ENCODE measurements at regions of chr1 and their contacts with region 1.

Region 1: GRCh38 chr1:116498789-116499628 is 71.8 kb downstream of the CD58 start:
- DNase-seq: peak; percentile 63 to 73
- H3K4me3 ChIP-seq: no peak overlapping the region
- H3K4me3 Mint-ChIP-seq: no peak overlapping the region
- H3K27ac Mint-ChIP-seq: no peak overlapping the region
- H3K4me1 ChIP-seq: peaks cover 17% of the 10 kb centered on the region
- H3K4me1 Mint-ChIP-seq: peaks cover 20% of the 10 kb centered on the region
- H3K27me3 ChIP-seq: no peaks in the 10 kb centered on the region
- H3K27me3 Mint-ChIP-seq: no peaks in the 10 kb centered on the region
- CTCF ChIP-seq: peak; percentile 65 to 69

Region 2: DNA sequence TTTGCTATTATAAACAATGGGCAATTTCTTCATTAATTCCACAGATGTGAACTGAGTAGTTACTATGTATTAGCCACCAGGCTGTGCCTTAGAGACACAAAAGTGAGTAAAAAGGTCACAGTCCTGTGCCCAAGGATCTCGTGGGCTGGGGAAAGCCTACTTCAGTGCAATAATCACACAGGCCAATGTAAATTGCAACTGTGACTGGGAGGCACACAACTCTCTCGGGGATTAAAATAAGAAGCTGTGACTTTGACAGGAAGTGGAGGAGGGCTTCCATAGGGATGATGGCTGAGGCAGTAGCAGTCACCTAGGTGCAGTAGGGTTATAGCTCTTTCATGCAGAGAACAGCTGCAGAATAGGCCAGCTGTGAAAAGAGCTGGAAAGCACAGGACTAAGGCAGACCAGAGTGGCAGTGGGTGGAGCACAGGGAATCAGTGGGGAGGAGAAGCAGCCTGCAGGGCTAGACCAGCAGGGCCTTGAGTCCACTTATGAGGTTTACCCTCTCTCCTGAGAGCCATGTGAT is 266.0 kb before region 1 on chr1:
- CTCF ChIA-PET with region 1: no interaction called
- POLR2A ChIA-PET with region 1: no interaction called
- intact Hi-C with region 1: loop called (anchors 1 kb)
- DNase-seq: no peak
- H3K4me3 ChIP-seq: no peak overlapping the region
- H3K4me3 Mint-ChIP-seq: no peak overlapping the region
- H3K27ac Mint-ChIP-seq: no peak overlapping the region
- H3K4me1 ChIP-seq: no peaks in the 10 kb centered on the region
- H3K4me1 Mint-ChIP-seq: no peaks in the 10 kb centered on the region
- H3K27me3 ChIP-seq: no peaks in the 10 kb centered on the region
- H3K27me3 Mint-ChIP-seq: no peaks in the 10 kb centered on the region
- CTCF ChIP-seq: no peak

Region 3: GRCh38 chr1:116418091-116418830 is 80.7 kb before region 1 on chr1:
- CTCF ChIA-PET with region 1: no interaction called
- POLR2A ChIA-PET with region 1: no interaction called
- intact Hi-C with region 1: no loop called
- DNase-seq: peak; percentile 83 to 85
- H3K4me3 ChIP-seq: peak overlapping the region; percentile 48
- H3K4me3 Mint-ChIP-seq: peak overlapping the region; percentile 75
- H3K27ac Mint-ChIP-seq: peak overlapping the region; percentile 64
- H3K4me1 ChIP-seq: peaks cover 5% of the 10 kb centered on the region; the same call in 1 of the 2 replicates
- H3K4me1 Mint-ChIP-seq: no peaks in the 10 kb centered on the region
- H3K27me3 ChIP-seq: no peaks in the 10 kb centered on the region
- H3K27me3 Mint-ChIP-seq: no peaks in the 10 kb centered on the region
- CTCF ChIP-seq: no peak